A673 (cell line): ENCODE measurements at regions of chr16 and their contacts with region 1.

Region 1: DNA sequence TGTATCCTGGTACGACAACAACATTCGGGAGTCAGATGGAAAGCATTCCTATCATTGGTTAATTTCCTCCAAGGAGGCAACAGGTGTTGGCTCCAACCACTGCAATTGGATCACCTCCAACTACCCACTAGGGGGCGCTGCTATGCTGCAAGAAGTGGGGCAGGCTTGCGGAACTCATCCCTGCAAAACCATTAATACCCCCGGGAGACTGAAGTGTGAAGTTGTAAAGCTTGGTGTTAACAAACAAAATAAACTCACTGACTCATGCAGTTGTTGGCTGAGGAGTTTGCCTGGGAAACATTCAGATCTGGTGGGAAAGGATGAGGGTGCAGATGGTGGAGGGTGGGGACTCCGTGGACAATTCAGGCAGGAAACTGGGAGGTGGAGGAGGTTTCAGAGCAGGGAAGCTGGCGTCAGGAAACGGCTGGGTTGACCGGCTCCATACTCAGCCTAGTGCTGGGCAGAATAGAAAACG is 84.9 kb downstream of the HS3ST2 start:
- DNase-seq: peak; percentile 89
- H3K4me3 ChIP-seq: no peak overlapping the region
- H3K27ac ChIP-seq: no peak overlapping the region
- H3K4me1 ChIP-seq: no peaks in the 10 kb centered on the region
- H3K27me3 ChIP-seq: peaks cover 13% of the 10 kb centered on the region
- CTCF ChIP-seq: peak; percentile 94

Region 2: DNA sequence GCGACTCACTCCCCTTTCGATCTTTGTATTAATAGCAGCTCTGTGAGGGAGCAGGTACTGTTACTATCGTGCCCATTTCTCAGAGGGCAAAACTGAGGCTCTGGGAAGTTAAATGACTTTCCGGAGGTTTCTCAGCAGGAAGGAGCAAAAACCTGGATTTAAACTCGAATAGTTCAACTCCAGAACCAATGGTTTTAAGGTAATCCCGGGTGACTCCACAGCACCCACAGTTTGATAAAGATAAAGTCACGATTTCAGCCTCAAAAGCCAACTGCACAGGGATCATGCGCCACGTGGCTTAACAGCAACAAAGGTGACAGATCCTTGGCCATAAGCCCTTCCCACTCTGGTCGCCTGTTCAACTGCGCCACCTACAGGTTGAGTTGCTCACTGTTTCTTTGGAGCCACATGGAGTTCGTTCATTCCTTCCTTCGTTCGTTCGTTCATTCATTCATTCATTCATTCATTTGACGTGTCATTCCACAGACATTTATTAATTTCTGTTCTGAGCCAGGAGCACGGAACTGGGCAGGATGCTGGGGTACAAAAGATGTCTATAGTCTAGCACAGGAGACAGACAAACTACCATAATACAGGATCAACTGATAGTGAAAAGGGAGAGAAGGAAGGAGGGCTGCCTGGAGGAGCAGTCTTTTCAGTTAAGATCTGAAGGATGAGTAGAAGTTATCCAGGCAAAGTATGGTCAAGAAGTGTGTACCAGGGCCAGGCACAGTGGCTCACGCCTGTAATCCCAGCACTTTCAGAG is 49.9 kb after region 1 on chr16:
- CTCF ChIA-PET with region 1: interaction called, 3 read pairs
- POLR2A ChIA-PET with region 1: no interaction called
- intact Hi-C with region 1: loop called (anchors 2 kb)
- DNase-seq: peak; percentile 80
- H3K4me3 ChIP-seq: no peak overlapping the region
- H3K27ac ChIP-seq: no peak overlapping the region
- H3K4me1 ChIP-seq: no peaks in the 10 kb centered on the region
- H3K27me3 ChIP-seq: peaks cover 31% of the 10 kb centered on the region
- CTCF ChIP-seq: peak; percentile 90

Region 3: DNA sequence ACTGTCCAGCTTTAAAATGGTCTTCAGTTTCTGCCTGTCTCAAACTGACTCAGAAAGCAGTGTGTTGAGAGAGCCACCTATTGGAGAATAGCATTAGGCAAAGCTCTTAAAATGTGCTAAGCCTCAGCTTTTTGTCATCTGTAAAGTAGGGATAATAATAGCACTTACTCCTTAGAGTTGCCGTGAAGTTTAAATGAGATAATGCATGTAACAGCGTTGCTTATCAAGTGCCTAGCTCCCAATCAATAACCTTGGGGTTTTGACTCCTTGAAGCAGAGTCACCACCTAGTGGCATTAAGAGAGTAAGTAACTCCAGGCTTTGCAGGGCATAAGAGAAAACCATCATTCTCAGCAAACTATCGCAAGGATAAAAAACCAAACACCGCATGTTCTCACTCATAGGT is 78.4 kb after region 1 on chr16:
- CTCF ChIA-PET with region 1: interaction called, 7 read pairs
- POLR2A ChIA-PET with region 1: no interaction called
- intact Hi-C with region 1: loop called (anchors 5 kb)
- DNase-seq: peak; percentile 36
- H3K4me3 ChIP-seq: no peak overlapping the region
- H3K27ac ChIP-seq: no peak overlapping the region
- H3K4me1 ChIP-seq: no peaks in the 10 kb centered on the region
- H3K27me3 ChIP-seq: peaks cover 3% of the 10 kb centered on the region
- CTCF ChIP-seq: peak; percentile 43; the same call in 1 of the 2 replicates

Region 4: DNA sequence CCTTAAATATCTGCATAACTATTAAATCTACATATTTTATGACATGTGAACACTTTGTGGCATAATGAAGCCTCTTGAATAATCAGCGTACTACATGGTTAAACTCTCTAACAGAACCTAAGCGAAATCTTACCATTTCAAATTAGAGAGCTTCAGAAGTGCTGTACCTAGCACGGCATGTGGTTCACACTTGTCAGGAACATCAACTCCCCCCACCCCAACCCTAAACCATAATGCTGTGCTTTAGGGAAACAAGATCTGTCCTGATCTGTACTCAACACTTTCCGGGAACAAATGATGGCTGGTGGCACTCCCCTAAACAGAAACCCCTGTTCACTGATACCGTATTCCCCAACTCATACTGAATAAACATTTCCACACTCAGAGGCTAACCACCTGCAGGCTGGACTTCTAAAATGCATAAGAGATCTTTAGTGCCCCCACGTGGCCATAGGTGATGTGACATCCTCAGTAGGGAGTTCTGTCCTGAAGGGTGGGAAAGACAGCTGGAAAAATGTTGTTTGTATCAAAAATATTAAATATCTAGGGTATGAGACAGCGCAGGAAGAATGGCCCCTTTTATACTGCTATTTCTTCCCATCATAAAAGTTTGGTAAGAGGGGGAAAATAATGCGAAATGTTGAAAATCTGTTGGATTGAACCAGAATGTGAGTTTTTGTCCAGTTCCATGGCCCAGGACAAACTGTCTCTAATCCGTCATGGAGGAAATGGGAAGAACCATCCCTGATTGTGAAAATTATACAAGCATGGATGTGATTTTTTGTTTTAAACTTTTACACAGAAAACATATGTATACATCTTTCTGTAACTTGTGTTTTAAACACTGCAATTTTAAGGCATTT is 161.8 kb after region 1 on chr16:
- CTCF ChIA-PET with region 1: interaction called, 5 read pairs
- POLR2A ChIA-PET with region 1: no interaction called
- intact Hi-C with region 1: loop called (anchors 2 kb)
- DNase-seq: peak; percentile 83
- H3K4me3 ChIP-seq: no peak overlapping the region
- H3K27ac ChIP-seq: no peak overlapping the region
- H3K4me1 ChIP-seq: no peaks in the 10 kb centered on the region
- H3K27me3 ChIP-seq: no peaks in the 10 kb centered on the region
- CTCF ChIP-seq: peak; percentile 86